ENCODE measurements at regions of chr1 and their contacts with region 1.

Region 1: DNA sequence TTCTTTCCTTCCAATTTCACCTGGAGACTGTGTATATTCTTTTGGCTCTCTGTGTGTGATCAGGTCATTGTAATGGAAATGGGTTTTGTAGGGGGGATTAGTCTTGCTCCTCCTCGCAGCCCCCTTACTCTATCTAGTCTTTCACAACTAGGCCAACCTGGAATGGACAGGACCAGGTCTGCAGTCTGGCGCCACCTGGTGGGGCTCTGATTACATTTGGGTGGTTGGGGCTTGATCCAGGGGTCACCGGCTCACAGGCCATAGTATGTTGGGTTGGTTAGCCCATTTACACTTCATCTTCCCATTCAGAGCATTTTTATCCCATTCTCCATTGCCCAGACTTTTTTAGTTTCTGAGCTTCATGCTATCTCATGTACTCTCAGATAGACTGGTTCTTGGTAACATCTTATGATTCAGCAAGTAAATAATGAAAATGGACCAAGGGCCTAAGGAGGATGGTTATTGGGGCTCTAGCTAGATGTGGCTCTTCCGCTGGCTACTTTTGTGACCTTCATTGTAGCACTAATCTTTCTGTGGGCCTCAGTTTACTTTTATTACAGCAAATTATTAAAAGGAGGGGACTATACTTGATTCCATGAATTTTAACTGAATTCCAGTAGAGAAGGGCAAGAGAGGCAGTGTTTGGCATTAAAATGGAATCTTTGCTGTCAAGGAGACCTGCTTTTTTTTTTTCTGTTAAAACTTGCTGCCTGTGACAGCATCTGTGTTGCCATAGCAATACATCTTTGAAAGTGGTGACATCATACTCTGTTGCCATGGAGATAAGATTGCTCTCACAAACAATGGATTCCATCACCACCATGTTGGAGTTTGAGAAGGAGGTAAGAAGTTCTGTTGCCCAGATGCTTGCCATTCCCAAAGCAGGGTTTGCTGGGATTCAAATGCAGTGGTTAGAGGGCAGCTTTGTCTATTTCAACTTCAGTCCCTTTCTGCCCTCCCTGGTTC is 150.1 kb downstream of the PLXNA2 start:
- DNase-seq: peak; percentile 39 to 90
- H3K4me3 ChIP-seq: no peak overlapping the region
- H3K27ac ChIP-seq: no peak overlapping the region
- H3K4me1 ChIP-seq: peaks cover 1 to 7% (median 4%) of the 10 kb centered on the region in 4 experiments; a peak in 5 of 7 replicates
- H3K27me3 ChIP-seq: no peaks in the 10 kb centered on the region
- CTCF ChIP-seq: peak; percentile 88 to 94 (median 89)
- EP300 ChIP-seq: no peak
- POLR2A ChIP-seq: no peak
- RAD21 ChIP-seq: peak; percentile 76 to 85

Region 2: DNA sequence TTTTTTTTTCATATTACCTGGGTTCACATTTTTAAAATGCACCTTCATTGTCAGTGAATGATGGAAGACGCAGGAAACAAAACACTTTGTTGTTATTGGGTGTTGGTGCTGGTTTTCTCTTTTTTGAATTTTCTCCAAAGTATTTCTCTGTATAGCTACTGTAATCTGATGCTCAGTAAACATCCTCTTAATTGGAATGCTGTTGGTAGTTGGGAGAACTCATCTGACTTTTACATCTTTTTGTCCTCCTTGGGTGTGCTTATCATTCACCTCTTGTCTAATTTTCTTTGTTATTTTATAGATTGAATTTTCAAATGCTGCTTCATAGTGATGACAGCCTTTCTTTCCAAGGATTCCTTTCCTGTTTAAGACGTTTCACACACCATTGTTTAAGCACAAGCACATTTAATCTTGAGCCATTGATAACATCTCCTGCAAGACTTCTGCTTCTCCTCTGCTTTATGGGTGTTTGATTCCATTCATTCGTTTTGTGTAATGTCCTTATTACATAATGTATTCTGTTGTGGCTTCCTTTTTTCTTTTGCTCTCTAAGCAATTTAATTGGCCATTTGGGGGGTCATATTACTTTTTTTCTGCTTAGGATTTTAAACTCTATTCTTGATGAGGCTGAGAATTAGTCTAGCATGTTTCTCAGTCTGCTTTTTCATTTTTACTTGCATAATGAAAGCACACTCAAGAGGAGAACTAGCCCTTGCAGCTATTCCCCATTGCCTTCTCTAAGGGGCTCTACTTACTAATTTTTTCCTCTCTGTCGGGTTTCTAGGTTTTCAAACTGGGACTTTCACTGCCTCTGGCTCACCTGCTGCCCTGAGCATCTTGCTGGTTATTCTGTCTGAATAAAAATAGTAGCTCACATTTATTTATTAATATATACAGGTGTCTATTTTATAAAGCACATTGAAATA is 141.2 kb before region 1 on chr1:
- CTCF ChIA-PET with region 1: no interaction called
- POLR2A ChIA-PET with region 1: no interaction called
- DNase-seq: no peak
- H3K4me3 ChIP-seq: no peak overlapping the region
- H3K27ac ChIP-seq: no peak overlapping the region
- H3K4me1 ChIP-seq: no peaks in the 10 kb centered on the region
- H3K27me3 ChIP-seq: peaks cover 1 to 10% (median 7%) of the 10 kb centered on the region in 4 experiments; a peak in 6 of 7 replicates
- CTCF ChIP-seq: no peak
- EP300 ChIP-seq: no peak
- POLR2A ChIP-seq: no peak
- RAD21 ChIP-seq: no peak

Region 3: GRCh38 chr1:208036109-208036808 is 57.8 kb before region 1 on chr1:
- CTCF ChIA-PET with region 1: interaction called, 257 read pairs
- POLR2A ChIA-PET with region 1: no interaction called
- DNase-seq: no peak
- H3K4me3 ChIP-seq: no peak overlapping the region
- H3K27ac ChIP-seq: no peak overlapping the region
- H3K4me1 ChIP-seq: peaks cover 0 to 3% (median 0%) of the 10 kb centered on the region in 4 experiments; a peak in 1 of 7 replicates
- H3K27me3 ChIP-seq: no peaks in the 10 kb centered on the region
- CTCF ChIP-seq: peak; percentile 34 to 69 (median 55)
- EP300 ChIP-seq: no peak
- POLR2A ChIP-seq: no peak
- RAD21 ChIP-seq: peak; percentile 60 to 68

Region 4: GRCh38 chr1:208059409-208059995 is 34.5 kb before region 1 on chr1:
- CTCF ChIA-PET with region 1: interaction called, 63 read pairs
- POLR2A ChIA-PET with region 1: no interaction called
- DNase-seq: no peak
- H3K4me3 ChIP-seq: no peak overlapping the region
- H3K27ac ChIP-seq: no peak overlapping the region
- H3K4me1 ChIP-seq: peaks cover 0 to 10% (median 5%) of the 10 kb centered on the region in 4 experiments; a peak in 6 of 7 replicates
- H3K27me3 ChIP-seq: no peaks in the 10 kb centered on the region
- CTCF ChIP-seq: no peak
- EP300 ChIP-seq: no peak
- POLR2A ChIP-seq: no peak
- RAD21 ChIP-seq: no peak

Region 5: GRCh38 chr1:208081972-208082371 is 12.1 kb before region 1 on chr1:
- CTCF ChIA-PET with region 1: interaction called, 94 read pairs
- POLR2A ChIA-PET with region 1: interaction called, 5 read pairs
- DNase-seq: no peak
- H3K4me3 ChIP-seq: no peak overlapping the region
- H3K27ac ChIP-seq: no peak overlapping the region
- H3K4me1 ChIP-seq: peaks cover 4 to 14% (median 7%) of the 10 kb centered on the region in 4 experiments; a peak in 6 of 7 replicates
- H3K27me3 ChIP-seq: peaks cover 0 to 4% (median 0%) of the 10 kb centered on the region in 4 experiments; a peak in 3 of 7 replicates
- CTCF ChIP-seq: peak in 1 of 3 experiments; percentile 8; a peak in 1 of 4 replicates
- EP300 ChIP-seq: no peak
- POLR2A ChIP-seq: no peak
- RAD21 ChIP-seq: 0 out of 4 replicates have a peak, but pooled peaks of 1 of the 2 experiments have one; percentile 23

Region 6: DNA sequence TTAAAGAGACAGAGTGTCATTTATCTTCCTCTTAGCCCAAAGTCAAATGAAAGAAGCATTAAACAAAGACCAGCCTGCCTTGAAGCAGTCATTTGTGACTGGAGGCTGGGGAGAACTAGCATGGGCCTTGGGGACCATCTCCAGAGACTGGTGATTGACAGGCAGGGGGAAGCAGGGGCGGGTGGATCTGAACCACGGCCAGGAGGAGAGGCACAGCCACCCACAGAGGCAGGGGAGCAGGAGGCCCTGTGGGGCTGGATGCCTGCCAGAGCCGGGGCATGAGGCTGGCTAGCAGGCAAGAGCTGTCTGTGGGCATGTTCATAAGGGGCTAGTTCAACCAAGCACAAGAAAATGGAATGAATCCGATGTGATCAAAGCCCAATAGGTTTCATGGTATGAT is 76.2 kb after region 1 on chr1:
- CTCF ChIA-PET with region 1: no interaction called
- POLR2A ChIA-PET with region 1: no interaction called
- DNase-seq: no peak
- H3K4me3 ChIP-seq: no peak overlapping the region
- H3K27ac ChIP-seq: no peak overlapping the region
- H3K4me1 ChIP-seq: peaks cover 4 to 13% (median 9%) of the 10 kb centered on the region in 4 experiments
- H3K27me3 ChIP-seq: no peaks in the 10 kb centered on the region
- CTCF ChIP-seq: no peak
- EP300 ChIP-seq: no peak
- POLR2A ChIP-seq: no peak
- RAD21 ChIP-seq: no peak

Region 7: GRCh38 chr1:208251911-208252835 is 158.1 kb after region 1 on chr1:
- CTCF ChIA-PET with region 1: interaction called, 10 read pairs
- POLR2A ChIA-PET with region 1: no interaction called
- DNase-seq: peak in 1 of 2 experiments; percentile 84
- H3K4me3 ChIP-seq: peak overlapping the region in 1 of 4 experiments; percentile 22; a peak in 1 of 8 replicates
- H3K27ac ChIP-seq: no peak overlapping the region
- H3K4me1 ChIP-seq: peaks cover 0 to 7% (median under 1%) of the 10 kb centered on the region in 4 experiments; a peak in 5 of 7 replicates
- H3K27me3 ChIP-seq: peaks cover 3 to 15% (median 13%) of the 10 kb centered on the region in 4 experiments; a peak in 6 of 7 replicates
- CTCF ChIP-seq: peak; percentile 63 to 72 (median 69)
- EP300 ChIP-seq: no peak
- POLR2A ChIP-seq: no peak
- RAD21 ChIP-seq: peak; percentile 66 to 82

Measured in H1 (cell line).